H1 (cell line): ENCODE measurements at regions of chr13 and their contacts with region 1.

Region 1: GRCh38 chr13:47472516-47472915 is 528.6 kb downstream of the SUCLA2 start:
- DNase-seq: no peak
- H3K4me3 ChIP-seq: peak overlapping the region in 1 of 4 experiments; percentile 22; a peak in 1 of 8 replicates
- H3K27ac ChIP-seq: no peak overlapping the region
- H3K4me1 ChIP-seq: peaks cover 0 to 8% (median 4%) of the 10 kb centered on the region in 4 experiments; a peak in 4 of 7 replicates
- H3K27me3 ChIP-seq: no peaks in the 10 kb centered on the region
- CTCF ChIP-seq: no peak
- EP300 ChIP-seq: no peak
- POLR2A ChIP-seq: no peak
- RAD21 ChIP-seq: no peak

Region 2: GRCh38 chr13:47459512-47459911 is 13.0 kb before region 1 on chr13:
- CTCF ChIA-PET with region 1: interaction called, 18 read pairs
- POLR2A ChIA-PET with region 1: no interaction called
- DNase-seq: no peak
- H3K4me3 ChIP-seq: no peak overlapping the region
- H3K27ac ChIP-seq: no peak overlapping the region
- H3K4me1 ChIP-seq: peaks cover 2 to 4% (median 3%) of the 10 kb centered on the region in 4 experiments
- H3K27me3 ChIP-seq: no peaks in the 10 kb centered on the region
- CTCF ChIP-seq: peak in 2 of 3 experiments; percentile 27 to 44; a peak in 2 of 4 replicates
- EP300 ChIP-seq: no peak
- POLR2A ChIP-seq: no peak
- RAD21 ChIP-seq: peak; percentile 48 to 56